Activated CD4-positive, alpha-beta memory T cell treated with anti-CD3 and anti-CD28 coated beads, Interleukin-2, amount 10 ng/mL, durations not matched to agents 7 days and 5 days (primary cell): ENCODE measurements at regions of chr3 and their contacts with region 1.

Region 1: DNA sequence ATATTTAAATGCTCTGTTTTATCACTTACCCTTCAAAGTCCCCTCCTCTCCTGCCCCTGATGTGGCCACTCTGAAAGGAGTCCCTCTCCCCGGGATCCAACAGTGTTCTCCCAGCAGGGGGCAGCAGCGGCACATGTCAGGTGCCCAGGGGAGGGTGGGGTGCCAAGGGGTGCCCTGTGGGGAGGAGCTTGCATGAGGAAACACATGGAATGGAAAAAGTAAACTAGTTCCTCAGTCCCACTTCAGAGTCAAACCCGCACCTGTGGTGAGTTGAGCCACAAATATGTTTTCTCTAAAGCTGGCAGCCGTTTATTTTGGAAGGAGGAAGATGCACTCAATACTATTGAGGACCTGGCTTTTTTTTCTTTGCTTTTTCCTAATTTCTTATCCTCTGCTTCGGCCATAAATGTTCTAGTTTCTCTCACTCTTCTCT is 30.1 kb upstream of the NRROS start:
- DNase-seq: peak; percentile 95
- H3K4me3 Mint-ChIP-seq: peak overlapping the region; percentile 42
- H3K27ac Mint-ChIP-seq: peak overlapping the region; percentile 81
- H3K4me1 Mint-ChIP-seq: peaks cover 54% of the 10 kb centered on the region
- H3K27me3 Mint-ChIP-seq: peaks cover 6% of the 10 kb centered on the region

Region 2: DNA sequence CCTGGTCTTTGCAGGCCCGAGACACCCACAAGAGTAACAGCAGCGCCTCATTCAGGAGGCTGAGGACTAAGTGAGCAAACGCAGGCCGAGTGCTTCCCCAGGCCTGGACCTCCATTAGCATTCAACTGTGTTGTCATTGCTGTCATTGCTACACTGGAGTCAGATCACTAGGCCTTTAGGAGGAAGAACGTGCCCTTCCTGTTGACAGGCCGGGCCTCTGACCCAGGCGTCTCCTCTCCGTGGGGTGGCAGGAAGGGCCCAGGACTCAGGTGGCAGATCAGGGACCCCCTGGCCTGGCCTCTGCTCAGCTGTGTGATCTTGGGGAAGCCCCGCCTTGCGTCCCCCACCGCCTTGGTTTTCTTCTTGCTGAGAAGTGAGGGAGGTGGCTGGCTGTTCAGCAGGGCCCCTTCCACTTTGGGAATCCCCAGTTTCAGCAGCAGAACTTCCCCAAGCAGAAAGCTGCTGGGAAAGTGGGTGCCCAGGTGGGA is 417.3 kb before region 1 on chr3:
- CTCF ChIA-PET with region 1: no interaction called
- POLR2A ChIA-PET with region 1: no interaction called
- DNase-seq: peak; percentile 58
- H3K4me3 Mint-ChIP-seq: peak overlapping the region; percentile 34
- H3K27ac Mint-ChIP-seq: peak overlapping the region; percentile 95
- H3K4me1 Mint-ChIP-seq: peaks cover 58% of the 10 kb centered on the region
- H3K27me3 Mint-ChIP-seq: no peaks in the 10 kb centered on the region

Region 3: GRCh38 chr3:196440041-196440537 is 169.3 kb before region 1 on chr3:
- CTCF ChIA-PET with region 1: no interaction called
- POLR2A ChIA-PET with region 1: no interaction called
- DNase-seq: no peak
- H3K4me3 Mint-ChIP-seq: no peak overlapping the region
- H3K27ac Mint-ChIP-seq: no peak overlapping the region
- H3K4me1 Mint-ChIP-seq: peaks cover 18% of the 10 kb centered on the region
- H3K27me3 Mint-ChIP-seq: no peaks in the 10 kb centered on the region

Region 4: GRCh38 chr3:196559826-196560225 is 49.5 kb before region 1 on chr3:
- CTCF ChIA-PET with region 1: no interaction called
- POLR2A ChIA-PET with region 1: no interaction called
- DNase-seq: no peak
- H3K4me3 Mint-ChIP-seq: no peak overlapping the region
- H3K27ac Mint-ChIP-seq: peak overlapping the region; percentile 48
- H3K4me1 Mint-ChIP-seq: peaks cover 50% of the 10 kb centered on the region
- H3K27me3 Mint-ChIP-seq: no peaks in the 10 kb centered on the region

Region 5: GRCh38 chr3:196632046-196632751 is 22.8 kb after region 1 on chr3:
- CTCF ChIA-PET with region 1: interaction called, 118 read pairs
- POLR2A ChIA-PET with region 1: interaction called, 177 read pairs
- DNase-seq: peak; percentile 97
- H3K4me3 Mint-ChIP-seq: peak overlapping the region; percentile 97
- H3K27ac Mint-ChIP-seq: peak overlapping the region; percentile 98
- H3K4me1 Mint-ChIP-seq: peaks cover 65% of the 10 kb centered on the region
- H3K27me3 Mint-ChIP-seq: no peaks in the 10 kb centered on the region

Region 6: DNA sequence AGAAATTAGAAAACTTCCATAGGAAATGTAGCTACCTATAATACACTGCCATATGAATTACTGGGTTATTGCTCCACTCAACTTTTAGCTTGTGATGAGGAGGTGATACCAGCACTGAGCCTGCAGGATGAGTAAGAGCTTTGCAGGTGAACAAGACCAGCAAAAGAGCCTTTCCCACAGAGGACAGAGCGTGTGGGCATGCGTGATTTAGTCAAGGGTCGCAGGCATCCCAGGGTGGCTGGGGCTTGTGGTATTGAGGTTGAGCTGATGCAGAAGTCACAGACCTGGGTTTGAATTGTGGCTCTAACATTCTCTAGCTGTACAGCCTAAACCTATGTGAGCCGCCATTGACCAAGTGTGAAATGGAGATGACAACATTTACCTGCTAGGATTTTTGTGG is 35.7 kb after region 1 on chr3:
- CTCF ChIA-PET with region 1: interaction called, 78 read pairs
- POLR2A ChIA-PET with region 1: interaction called, 131 read pairs
- DNase-seq: no peak
- H3K4me3 Mint-ChIP-seq: no peak overlapping the region
- H3K27ac Mint-ChIP-seq: peak overlapping the region; percentile 14
- H3K4me1 Mint-ChIP-seq: peaks cover 72% of the 10 kb centered on the region
- H3K27me3 Mint-ChIP-seq: no peaks in the 10 kb centered on the region

Region 7: DNA sequence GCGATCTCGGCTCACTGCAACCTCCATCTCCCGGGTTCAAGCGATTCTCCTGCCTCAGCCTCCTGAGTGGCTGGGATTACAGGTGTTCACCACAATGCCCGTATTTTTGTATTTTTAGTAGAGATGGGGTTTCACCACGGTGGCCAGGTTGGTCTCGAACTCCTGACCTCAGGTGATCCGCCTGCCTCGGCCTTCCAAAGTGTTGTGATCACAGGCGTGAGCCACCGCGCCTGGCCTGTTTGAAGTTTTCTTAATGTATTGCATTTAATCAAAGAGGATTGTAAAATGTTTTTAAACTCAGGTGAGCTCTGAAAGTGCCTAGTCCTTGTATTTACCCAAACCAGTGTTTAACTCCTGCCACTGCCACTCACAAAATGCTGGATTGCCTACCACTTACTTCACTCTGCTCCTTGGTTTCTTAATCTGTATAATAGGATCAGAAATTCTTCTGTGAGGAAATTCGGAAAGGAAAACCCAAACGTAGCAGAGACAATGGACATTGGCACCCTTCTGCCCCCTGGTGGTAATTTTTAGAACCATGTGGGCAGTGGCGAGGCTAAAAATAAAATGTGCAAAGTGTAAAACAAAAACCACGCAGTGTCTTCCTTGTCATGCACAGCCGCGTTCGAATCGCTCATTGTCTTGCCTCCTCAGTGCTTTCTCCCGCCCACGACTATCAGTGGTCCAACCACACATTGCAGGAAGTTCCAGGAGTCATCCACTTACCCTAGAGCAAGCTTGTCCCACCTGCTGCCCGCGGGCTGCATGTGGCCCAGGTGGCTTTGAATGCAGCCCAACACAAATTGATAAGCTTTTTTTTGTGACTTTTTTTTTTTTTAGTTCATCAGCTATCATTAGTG is 75.4 kb after region 1 on chr3:
- CTCF ChIA-PET with region 1: interaction called, 219 read pairs
- POLR2A ChIA-PET with region 1: interaction called, 26 read pairs
- DNase-seq: peak; percentile 71
- H3K4me3 Mint-ChIP-seq: peak overlapping the region; percentile 52
- H3K27ac Mint-ChIP-seq: peak overlapping the region; percentile 63
- H3K4me1 Mint-ChIP-seq: peaks cover 33% of the 10 kb centered on the region
- H3K27me3 Mint-ChIP-seq: no peaks in the 10 kb centered on the region

Region 8: DNA sequence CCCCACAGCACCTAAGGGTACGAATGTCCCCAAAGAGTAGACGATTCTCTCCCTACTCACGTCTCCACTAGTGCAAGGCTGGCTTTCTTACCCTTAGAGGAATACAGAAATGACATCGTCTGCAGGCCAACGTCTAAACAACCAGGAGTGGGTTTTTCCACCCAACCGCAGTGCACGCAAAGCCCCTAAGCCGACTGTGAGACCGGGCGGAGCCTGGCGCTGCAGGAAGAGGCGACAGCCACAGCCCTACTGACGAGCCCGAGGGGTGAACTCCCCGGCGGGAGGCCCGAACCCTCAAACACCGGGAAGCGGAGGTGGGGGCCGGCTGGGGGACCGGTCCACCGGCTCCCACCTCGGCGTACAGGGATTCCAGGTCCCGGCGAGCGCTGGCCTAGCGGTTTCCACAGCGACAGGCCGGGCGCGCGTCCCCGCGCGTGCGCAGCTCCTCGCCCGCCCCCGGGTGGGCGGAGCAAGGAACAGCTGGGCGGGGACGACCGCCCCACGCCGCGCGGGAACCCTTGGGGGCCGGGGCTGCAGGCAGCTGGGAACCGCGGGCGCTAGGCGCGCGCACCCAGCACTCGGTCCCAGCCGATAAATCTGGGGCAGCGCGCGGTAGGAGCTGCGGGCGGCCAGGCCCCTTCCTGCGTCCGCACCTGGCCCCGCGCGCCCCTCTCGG is 102.6 kb after region 1 on chr3 and contains the starts of genes CEP19 and PIGX:
- CTCF ChIA-PET with region 1: interaction called, 11 read pairs
- POLR2A ChIA-PET with region 1: interaction called, 9 read pairs
- DNase-seq: peak; percentile 91
- H3K4me3 Mint-ChIP-seq: peak within 1 kb of the TSS; percentile 82
- H3K27ac Mint-ChIP-seq: peak within 1 kb of the TSS; percentile 96
- H3K4me1 Mint-ChIP-seq: peaks cover 43% of the 10 kb centered on the region
- H3K27me3 Mint-ChIP-seq: no peaks in the 10 kb centered on the region
- total RNA-seq, gene CEP19: 5.3 to 5.5 TPM
- total RNA-seq, gene PIGX: 47.2 to 50.0 TPM

Region 9: GRCh38 chr3:196942226-196942914 is 333.0 kb after region 1 on chr3 and contains the start of gene NCBP2:
- CTCF ChIA-PET with region 1: interaction called, 7 read pairs
- POLR2A ChIA-PET with region 1: interaction called, 11 read pairs
- DNase-seq: peak; percentile 100
- H3K4me3 Mint-ChIP-seq: peak within 1 kb of the TSS; percentile 90
- H3K27ac Mint-ChIP-seq: peak within 1 kb of the TSS; percentile 98
- H3K4me1 Mint-ChIP-seq: peaks cover 58% of the 10 kb centered on the region
- H3K27me3 Mint-ChIP-seq: no peaks in the 10 kb centered on the region
- total RNA-seq, gene NCBP2: 54.6 to 55.6 TPM